T-cell (primary cell): ENCODE measurements at regions of chr2 and their contacts with region 1.

Region 1: GRCh38 chr2:61905372-61906185 is at the start of gene COMMD1:
- DNase-seq: peak; percentile 65 to 86 (median 76)
- ATAC-seq: peak; percentile 99
- H3K4me3 ChIP-seq: peak within 1 kb of the TSS; percentile 81 to 97
- H3K4me3 Mint-ChIP-seq: peak within 1 kb of the TSS; percentile 94 to 99 (median 95)
- H3K27ac ChIP-seq: peak within 1 kb of the TSS; percentile 59
- H3K27ac Mint-ChIP-seq: peak within 1 kb of the TSS; percentile 67 to 86
- H3K4me1 ChIP-seq: peaks cover 3 to 4% of the 10 kb centered on the region in 2 experiments
- H3K4me1 Mint-ChIP-seq: peaks cover 21 to 30% (median 29%) of the 10 kb centered on the region in 3 donors
- H3K27me3 ChIP-seq: no peaks in the 10 kb centered on the region
- H3K27me3 Mint-ChIP-seq: no peaks in the 10 kb centered on the region
- total RNA-seq, gene COMMD1: 18.2 to 23.8 (median 19.6) TPM

Region 2: DNA sequence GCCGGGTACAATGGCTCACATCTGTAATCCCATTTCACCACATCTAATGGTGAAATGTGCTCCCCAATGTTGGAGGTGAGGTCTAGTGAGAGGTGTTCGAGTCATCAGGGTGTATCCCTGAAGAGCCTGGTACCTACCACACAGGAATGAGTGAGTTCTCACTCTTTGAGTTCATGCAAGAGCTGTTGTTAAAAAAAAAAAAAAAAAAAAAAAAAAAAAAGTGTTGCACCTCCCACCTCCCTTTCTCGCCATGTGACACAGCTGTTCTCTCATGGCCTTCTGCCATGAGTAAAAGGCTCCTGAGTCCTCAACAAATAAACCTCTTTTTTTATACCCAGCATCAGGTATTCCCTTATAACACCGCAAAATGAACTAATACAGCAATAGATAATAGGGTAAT is 637.3 kb before region 1 on chr2:
- CTCF ChIA-PET with region 1: no interaction called
- POLR2A ChIA-PET with region 1: interaction called in 1 of 2 experiments, 14 read pairs
- DNase-seq: no peak
- ATAC-seq: no peak
- H3K4me3 ChIP-seq: no peak overlapping the region
- H3K4me3 Mint-ChIP-seq: no peak overlapping the region
- H3K27ac ChIP-seq: no peak overlapping the region
- H3K27ac Mint-ChIP-seq: no peak overlapping the region
- H3K4me1 ChIP-seq: no peaks in the 10 kb centered on the region
- H3K4me1 Mint-ChIP-seq: no peaks in the 10 kb centered on the region
- H3K27me3 ChIP-seq: no peaks in the 10 kb centered on the region
- H3K27me3 Mint-ChIP-seq: no peaks in the 10 kb centered on the region

Region 3: DNA sequence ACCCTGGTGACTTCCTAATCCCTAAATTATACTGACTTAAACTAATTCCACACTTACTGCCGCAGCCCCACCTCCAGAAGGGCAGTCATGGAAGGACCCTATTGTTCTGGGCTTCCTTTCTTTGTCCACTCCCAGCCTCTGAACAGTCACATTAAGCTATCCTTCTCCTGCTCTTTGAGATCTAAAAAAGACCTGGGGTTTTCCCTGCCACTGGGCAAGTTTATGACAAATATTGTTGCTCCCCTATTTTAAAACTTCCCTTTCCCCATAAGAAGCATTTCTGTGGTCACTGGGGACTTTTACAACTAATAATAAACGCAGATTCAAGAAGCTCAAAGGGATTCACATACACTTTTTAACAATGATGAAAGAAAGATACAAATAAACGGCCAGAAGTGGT is 320.2 kb before region 1 on chr2:
- CTCF ChIA-PET with region 1: interaction called in 1 of 2 experiments, 11 read pairs
- POLR2A ChIA-PET with region 1: no interaction called
- DNase-seq: no peak
- ATAC-seq: no peak
- H3K4me3 ChIP-seq: no peak overlapping the region
- H3K4me3 Mint-ChIP-seq: no peak overlapping the region
- H3K27ac ChIP-seq: no peak overlapping the region
- H3K27ac Mint-ChIP-seq: no peak overlapping the region
- H3K4me1 ChIP-seq: peaks cover 0 to 2% of the 10 kb centered on the region in 2 experiments
- H3K4me1 Mint-ChIP-seq: peaks cover 0 to 5% (median 4%) of the 10 kb centered on the region in 3 donors
- H3K27me3 ChIP-seq: no peaks in the 10 kb centered on the region
- H3K27me3 Mint-ChIP-seq: no peaks in the 10 kb centered on the region